ENCODE measurements at regions of chr1 and their contacts with region 1.

Region 1: GRCh38 chr1:2194898-2195673 is 514 bp upstream of the FAAP20 start:
- DNase-seq: peak; percentile 95 to 96
- ATAC-seq: peak; percentile 89
- H3K4me3 ChIP-seq: peak overlapping the region; percentile 19 to 30
- H3K27ac ChIP-seq: peak overlapping the region; percentile 10 to 38
- H3K4me1 ChIP-seq: no peaks in the 10 kb centered on the region
- H3K27me3 ChIP-seq: no peaks in the 10 kb centered on the region

Region 2: GRCh38 chr1:2044510-2045319 is 150.4 kb before region 1 on chr1:
- intact Hi-C with region 1: no loop called
- DNase-seq: peak; percentile 71 to 90
- ATAC-seq: peak; percentile 75
- H3K4me3 ChIP-seq: no peak overlapping the region
- H3K27ac ChIP-seq: no peak overlapping the region
- H3K4me1 ChIP-seq: no peaks in the 10 kb centered on the region
- H3K27me3 ChIP-seq: no peaks in the 10 kb centered on the region

Region 3: GRCh38 chr1:2115681-2116341 is 79.3 kb before region 1 on chr1:
- intact Hi-C with region 1: no loop called
- DNase-seq: peak; percentile 36 to 60
- ATAC-seq: no peak
- H3K4me3 ChIP-seq: no peak overlapping the region
- H3K27ac ChIP-seq: no peak overlapping the region
- H3K4me1 ChIP-seq: no peaks in the 10 kb centered on the region
- H3K27me3 ChIP-seq: no peaks in the 10 kb centered on the region

Region 4: GRCh38 chr1:2314803-2315673 is 120.0 kb after region 1 on chr1:
- intact Hi-C with region 1: loop called (anchors 5 kb)
- DNase-seq: peak; percentile 77 to 89
- ATAC-seq: peak; percentile 39
- H3K4me3 ChIP-seq: peak overlapping the region; percentile 30 to 41
- H3K27ac ChIP-seq: peak overlapping the region in 1 of 2 donors; percentile 4
- H3K4me1 ChIP-seq: no peaks in the 10 kb centered on the region
- H3K27me3 ChIP-seq: no peaks in the 10 kb centered on the region

Region 5: DNA sequence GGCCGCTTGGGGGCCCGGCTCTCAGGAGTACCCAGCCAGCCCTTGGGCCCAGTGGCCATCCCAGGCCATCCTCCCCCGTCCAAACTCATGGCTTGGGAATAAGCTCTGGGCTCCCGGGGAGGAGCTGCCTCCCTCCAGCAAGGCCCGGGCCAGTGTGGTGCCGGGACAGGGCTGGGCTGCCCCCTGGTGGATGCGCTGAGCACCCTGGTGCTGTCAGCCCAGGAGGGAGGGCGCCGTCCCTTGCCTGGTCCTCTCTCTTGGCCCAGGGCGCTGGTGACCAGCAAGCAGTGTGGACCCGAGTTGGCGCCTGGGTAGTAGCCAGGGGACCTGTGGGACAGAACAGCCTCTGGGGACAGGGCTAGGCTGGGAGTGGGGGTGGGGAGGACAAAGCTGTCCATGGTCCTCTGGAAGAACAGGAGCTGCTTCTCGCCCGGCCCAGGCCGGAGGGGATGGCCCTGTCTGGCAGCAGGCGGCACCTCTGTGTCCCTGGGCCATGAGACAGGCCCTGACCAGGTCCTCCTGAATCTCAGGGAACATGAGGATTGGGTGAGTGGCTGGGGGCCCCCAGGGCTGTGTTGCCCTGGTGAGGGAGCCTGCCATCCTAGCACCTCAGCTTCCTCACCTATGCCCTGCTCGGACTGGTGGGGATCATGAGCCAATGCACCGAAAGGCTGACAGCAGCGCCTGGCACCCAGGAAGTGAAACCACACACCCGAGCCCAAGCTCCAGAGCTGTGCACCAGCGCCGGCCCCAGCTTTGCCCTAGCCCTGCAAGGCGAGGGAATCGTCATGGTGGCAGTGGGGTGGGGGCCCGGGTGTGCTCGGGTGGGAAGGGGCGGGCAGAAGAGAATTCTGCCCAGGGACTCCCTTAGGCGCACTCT is 186.9 kb after region 1 on chr1:
- intact Hi-C with region 1: loop called (anchors 1 to 2 kb)
- DNase-seq: peak; percentile 91 to 97
- ATAC-seq: peak; percentile 95
- H3K4me3 ChIP-seq: no peak overlapping the region
- H3K27ac ChIP-seq: no peak overlapping the region
- H3K4me1 ChIP-seq: no peaks in the 10 kb centered on the region
- H3K27me3 ChIP-seq: no peaks in the 10 kb centered on the region

Region 6: GRCh38 chr1:2545759-2546514 is 350.9 kb after region 1 on chr1:
- intact Hi-C with region 1: loop called in 1 of 2 experiments (anchors 10 kb)
- DNase-seq: peak; percentile 93 to 94
- ATAC-seq: peak; percentile 77
- H3K4me3 ChIP-seq: peak overlapping the region in 1 of 2 donors; percentile 43
- H3K27ac ChIP-seq: no peak overlapping the region
- H3K4me1 ChIP-seq: no peaks in the 10 kb centered on the region
- H3K27me3 ChIP-seq: no peaks in the 10 kb centered on the region